ENCODE measurements at regions of chr1 and their contacts with region 1.

Region 1: DNA sequence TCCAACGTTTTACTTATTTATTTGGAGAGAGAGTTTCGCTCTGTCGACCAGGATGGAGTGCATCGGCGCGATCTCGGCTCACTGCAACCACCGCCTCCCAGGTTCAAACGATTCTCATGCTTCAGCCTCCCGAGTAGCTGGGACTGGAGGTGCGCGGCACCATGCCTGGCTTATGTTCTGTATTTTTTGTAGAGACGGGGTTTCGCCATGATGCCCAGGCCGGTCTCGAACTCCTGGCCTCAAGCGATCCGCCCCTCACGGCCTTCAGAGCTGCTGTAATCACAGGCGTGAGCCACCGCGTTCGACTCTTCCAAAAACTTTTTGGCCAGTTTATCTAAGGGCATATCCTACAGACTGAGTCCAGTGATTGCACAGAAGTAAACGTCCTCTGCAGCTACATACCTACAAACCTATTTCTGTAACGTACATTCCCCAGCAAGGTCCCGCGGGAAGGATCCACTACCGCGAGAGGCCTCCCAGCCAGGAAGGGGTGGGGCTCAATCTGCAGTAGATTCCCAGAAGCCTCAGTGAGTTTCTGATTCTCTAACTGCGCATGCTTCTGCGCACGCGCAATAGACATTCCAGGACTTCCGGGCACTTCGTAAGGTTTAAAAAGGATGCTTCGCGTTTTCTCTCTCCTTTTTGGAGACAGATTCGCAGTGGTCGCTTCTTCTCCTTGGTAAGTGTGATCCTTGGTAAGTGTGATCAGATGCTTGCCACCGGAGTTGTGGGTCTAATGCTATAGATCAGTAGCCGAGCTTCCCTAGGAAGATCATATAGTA is at the start of gene RCC1:
- DNase-seq: peak; percentile 97
- ATAC-seq: peak; percentile 85
- H3K4me3 Mint-ChIP-seq: peak within 1 kb of the TSS; percentile 98
- H3K27ac Mint-ChIP-seq: peak within 1 kb of the TSS; percentile 99
- H3K4me1 Mint-ChIP-seq: peaks cover 26% of the 10 kb centered on the region
- H3K27me3 Mint-ChIP-seq: peaks cover 1% of the 10 kb centered on the region
- total RNA-seq, gene RCC1: 103 to 107 TPM

Region 2: DNA sequence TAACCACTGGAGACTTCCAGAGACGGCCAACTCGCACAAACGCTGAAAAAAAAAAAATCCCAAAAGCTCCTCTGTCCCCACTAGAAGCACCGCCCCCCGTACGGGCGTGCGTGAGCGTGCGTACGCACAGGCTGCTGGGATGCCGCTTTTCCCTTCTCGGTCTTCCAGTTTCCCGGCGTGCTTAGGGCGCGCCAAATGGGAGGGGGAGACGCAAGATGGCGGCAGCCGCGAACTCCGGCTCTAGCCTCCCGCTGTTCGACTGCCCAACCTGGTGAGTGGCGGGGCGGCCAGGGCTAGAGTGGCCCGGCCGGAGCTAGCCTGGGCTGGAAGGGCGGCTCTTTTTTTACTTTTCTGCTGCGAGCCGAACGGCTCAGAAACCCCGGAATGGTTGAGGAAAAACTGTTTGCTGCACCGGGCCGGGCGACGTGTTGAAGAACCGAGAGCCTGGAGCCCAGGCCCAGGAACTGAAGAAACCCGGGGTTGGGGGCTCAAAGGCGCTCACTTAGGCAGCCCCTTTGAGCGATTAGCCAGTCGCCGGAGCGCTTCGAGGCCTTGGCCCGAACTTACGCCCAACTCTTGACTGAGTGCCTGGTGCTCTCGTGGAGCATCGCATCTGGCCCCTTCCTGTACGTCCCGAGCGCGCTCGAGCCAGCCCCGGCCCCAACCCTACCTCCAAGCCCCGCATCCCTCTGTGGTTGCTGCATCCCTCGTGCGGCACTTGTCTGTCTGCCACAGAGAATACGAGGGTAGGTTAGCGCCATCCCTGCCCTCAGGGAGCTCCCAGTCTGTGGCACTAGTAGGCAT is 674.8 kb before region 1 on chr1 and contains the start of gene PPP1R8:
- CTCF ChIA-PET with region 1: no interaction called
- POLR2A ChIA-PET with region 1: no interaction called
- intact Hi-C with region 1: loop called in 1 of 2 experiments (anchors 2 kb)
- DNase-seq: peak; percentile 94
- ATAC-seq: peak; percentile 99
- H3K4me3 Mint-ChIP-seq: peak within 1 kb of the TSS; percentile 94
- H3K27ac Mint-ChIP-seq: peak within 1 kb of the TSS; percentile 94
- H3K4me1 Mint-ChIP-seq: peaks cover 40% of the 10 kb centered on the region
- H3K27me3 Mint-ChIP-seq: no peaks in the 10 kb centered on the region
- total RNA-seq, gene PPP1R8: 49.6 to 65.9 TPM

Region 3: GRCh38 chr1:28329395-28330153 is 176.0 kb before region 1 on chr1:
- CTCF ChIA-PET with region 1: no interaction called
- POLR2A ChIA-PET with region 1: interaction called, 5 read pairs
- intact Hi-C with region 1: loop called (anchors 1 to 5 kb)
- DNase-seq: peak; percentile 61
- ATAC-seq: peak; percentile 19
- H3K4me3 Mint-ChIP-seq: peak overlapping the region; percentile 96
- H3K27ac Mint-ChIP-seq: peak overlapping the region; percentile 97
- H3K4me1 Mint-ChIP-seq: peaks cover 39% of the 10 kb centered on the region
- H3K27me3 Mint-ChIP-seq: no peaks in the 10 kb centered on the region

Region 4: GRCh38 chr1:28409090-28409489 is 96.5 kb before region 1 on chr1:
- CTCF ChIA-PET with region 1: no interaction called
- POLR2A ChIA-PET with region 1: interaction called, 8 read pairs
- intact Hi-C with region 1: loop called in 1 of 2 experiments (anchors 5 kb)
- DNase-seq: no peak
- ATAC-seq: no peak
- H3K4me3 Mint-ChIP-seq: no peak overlapping the region
- H3K27ac Mint-ChIP-seq: no peak overlapping the region
- H3K4me1 Mint-ChIP-seq: peaks cover 2% of the 10 kb centered on the region
- H3K27me3 Mint-ChIP-seq: no peaks in the 10 kb centered on the region

Region 5: DNA sequence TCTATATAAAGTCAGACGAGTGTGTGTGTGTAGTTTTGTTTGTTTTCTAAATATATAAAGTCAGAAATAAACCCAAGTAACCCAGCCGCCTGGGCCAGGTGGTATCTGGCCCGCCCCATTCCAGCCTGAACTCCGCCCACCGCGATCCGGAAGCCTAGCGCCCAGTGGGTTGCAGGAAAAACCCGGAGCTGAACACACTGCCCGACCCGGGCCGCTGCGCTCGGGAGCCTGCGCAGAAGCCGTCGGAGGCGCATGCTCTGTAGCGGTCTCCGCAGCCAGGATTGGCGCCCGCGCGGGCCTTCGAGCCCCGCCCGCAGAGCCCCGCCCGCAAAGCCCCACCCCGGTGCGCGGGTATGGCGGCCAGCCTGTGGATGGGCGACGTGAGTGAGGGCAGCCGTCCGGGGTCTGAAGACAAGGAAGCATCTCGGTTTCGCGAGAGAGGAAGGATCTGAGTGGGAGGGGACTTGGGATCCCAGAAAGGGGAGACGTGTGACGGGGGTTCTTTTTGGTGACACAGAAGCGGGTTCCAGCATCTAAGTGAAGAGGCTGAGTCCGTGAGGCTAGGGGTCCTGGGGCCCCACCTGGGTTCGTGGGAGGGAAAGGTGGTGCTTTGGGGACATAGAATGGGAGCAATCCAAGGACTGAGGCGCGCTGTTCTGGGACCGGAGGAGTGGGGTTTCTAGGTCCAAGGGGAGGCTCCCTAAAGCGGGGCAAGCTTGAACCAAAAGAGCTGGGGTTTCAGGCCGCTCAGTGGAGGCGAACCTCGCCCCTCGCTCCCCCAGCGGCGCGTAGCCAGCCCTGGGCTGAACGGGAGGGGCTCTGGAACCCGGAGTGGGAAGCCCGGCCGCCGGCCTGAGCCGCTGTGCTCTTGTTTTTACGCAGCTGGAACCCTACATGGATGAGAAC is 47.4 kb after region 1 on chr1 and contains the start of gene TRNAU1AP:
- CTCF ChIA-PET with region 1: interaction called, 3 read pairs
- POLR2A ChIA-PET with region 1: interaction called, 4 read pairs
- intact Hi-C with region 1: loop called in 1 of 2 experiments (anchors 1 kb)
- DNase-seq: peak; percentile 99
- ATAC-seq: peak; percentile 94
- H3K4me3 Mint-ChIP-seq: peak within 1 kb of the TSS; percentile 92
- H3K27ac Mint-ChIP-seq: peak within 1 kb of the TSS; percentile 95
- H3K4me1 Mint-ChIP-seq: peaks cover 24% of the 10 kb centered on the region
- H3K27me3 Mint-ChIP-seq: no peaks in the 10 kb centered on the region
- total RNA-seq, gene TRNAU1AP: 50.7 to 60.2 TPM

Region 6: GRCh38 chr1:28898405-28898881 is 392.8 kb after region 1 on chr1:
- CTCF ChIA-PET with region 1: no interaction called
- POLR2A ChIA-PET with region 1: no interaction called
- intact Hi-C with region 1: no loop called
- DNase-seq: no peak
- ATAC-seq: no peak
- H3K4me3 Mint-ChIP-seq: no peak overlapping the region
- H3K27ac Mint-ChIP-seq: no peak overlapping the region
- H3K4me1 Mint-ChIP-seq: peaks cover 18% of the 10 kb centered on the region
- H3K27me3 Mint-ChIP-seq: no peaks in the 10 kb centered on the region

Measured in activated CD4-positive, alpha-beta T cell treated with anti-CD3 and anti-CD28 coated beads for 36 hours (primary cell).